Cardiac septum (tissue), 1 donor: ENCODE measurements at regions of chr2 and their contacts with region 1.

Region 1: DNA sequence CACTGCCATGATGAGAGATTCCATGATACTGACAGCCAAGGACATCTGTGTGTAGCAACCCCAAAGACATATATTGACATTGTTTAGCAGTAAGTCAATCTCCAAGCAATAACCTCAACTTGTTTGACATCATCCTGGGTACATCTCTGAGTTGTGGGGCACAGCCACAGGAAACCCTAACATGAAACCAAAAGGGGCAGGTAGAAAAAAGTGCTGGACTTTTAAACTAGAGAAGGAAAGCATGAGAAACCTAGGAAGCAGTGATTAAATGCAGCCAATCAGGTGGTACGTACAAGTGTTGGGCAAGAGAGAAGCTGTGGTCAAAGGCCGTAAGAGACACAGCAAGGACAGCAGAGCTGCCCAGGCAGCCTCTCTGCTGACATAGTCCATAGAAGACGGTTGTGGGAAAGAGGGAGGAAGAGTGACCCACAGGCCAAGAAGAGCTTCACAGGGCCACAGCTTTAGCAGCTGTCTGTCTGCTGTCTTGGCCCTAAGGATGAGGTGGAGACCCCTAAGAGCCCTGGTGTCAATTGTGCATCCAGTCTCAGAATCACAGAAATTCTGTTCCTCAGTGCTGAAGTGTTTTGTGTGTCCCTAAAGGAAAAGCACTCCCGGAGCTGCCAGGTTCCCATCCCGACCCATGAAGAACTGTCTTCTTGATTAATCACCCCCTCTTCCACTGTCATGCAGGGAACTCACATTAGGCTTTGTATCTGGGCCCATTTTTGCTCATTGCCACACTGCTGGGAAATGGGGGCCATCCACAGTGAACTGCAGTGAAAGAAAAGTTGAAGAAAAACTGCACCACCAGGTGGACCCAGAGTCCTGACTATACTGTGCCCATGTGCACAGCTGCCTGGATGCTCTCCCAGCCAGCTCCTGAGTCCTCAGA is 25.4 kb upstream of the CHN1 start:
- DNase-seq: no peak

Region 2: GRCh38 chr2:175062787-175063585 is 32.4 kb after region 1 on chr2:
- intact Hi-C with region 1: no loop called
- DNase-seq: no peak

Region 3: DNA sequence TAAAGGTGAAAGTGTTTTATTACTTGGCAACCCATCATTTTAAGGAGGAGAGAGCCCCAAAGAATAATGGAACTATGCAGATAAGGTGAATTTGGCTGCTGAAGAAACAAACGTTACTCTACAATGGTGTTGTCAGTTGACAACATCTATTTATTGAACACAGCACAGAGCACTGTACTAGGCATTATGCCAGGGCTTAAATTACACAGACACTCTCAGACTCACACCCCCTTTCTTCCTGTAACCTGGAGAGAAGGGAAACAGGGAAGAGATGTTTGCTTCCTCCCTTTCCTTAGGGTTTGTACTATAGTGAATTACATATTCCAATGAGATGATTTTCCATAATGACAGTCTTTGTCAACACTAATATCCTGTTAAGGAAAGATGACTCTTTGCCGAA is 244.9 kb after region 1 on chr2:
- intact Hi-C with region 1: loop called (anchors 10 kb)
- DNase-seq: no peak